Body of pancreas (tissue), 4 donors: ENCODE measurements at regions of chr5 and their contacts with region 1.

Region 1: DNA sequence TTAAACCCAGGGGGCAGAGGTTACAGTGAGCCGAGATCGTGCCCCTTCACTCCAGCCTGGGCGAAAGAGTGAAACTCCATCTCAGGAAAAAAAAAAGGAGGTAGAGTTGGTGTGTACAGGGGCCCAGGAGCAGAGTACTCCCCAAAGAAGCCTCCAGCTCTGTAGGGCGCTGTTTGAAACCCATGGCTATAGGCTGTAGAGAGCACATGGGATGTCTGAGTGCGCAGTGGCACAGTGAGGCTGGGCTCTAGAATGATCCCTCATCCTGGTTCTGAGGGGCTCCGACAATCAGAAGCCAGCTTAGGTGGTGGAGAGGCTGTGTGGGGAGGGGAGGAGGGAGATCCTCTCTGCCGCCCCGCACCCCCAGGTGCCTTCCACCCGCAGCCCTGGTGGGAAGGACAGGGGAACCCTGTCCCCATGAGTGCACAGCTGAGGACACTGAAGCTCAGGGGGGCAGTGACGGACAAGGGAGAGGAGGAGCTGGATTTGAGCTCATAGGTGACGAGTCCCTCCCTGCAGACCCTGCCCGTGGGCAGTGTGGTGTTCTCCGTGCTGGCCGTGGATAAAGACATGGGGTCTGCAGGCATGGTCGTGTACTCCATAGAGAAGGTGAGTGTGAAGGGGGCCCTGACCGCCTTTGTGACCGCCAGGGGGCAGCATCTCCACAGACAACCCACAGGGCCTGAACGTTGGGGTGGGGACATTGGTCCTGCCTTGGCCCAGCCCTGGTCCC is 24.6 kb downstream of the CDHR2 start:
- DNase-seq: peak; percentile 54 to 79 (median 66)
- ATAC-seq: peak; percentile 67
- H3K4me3 ChIP-seq: no peak overlapping the region
- H3K27ac ChIP-seq: no peak overlapping the region
- H3K4me1 ChIP-seq: no peaks in the 10 kb centered on the region
- H3K27me3 ChIP-seq: no peaks in the 10 kb centered on the region
- CTCF ChIP-seq: peak; percentile 53 to 77 (median 67)
- POLR2A ChIP-seq: no peak

Region 2: DNA sequence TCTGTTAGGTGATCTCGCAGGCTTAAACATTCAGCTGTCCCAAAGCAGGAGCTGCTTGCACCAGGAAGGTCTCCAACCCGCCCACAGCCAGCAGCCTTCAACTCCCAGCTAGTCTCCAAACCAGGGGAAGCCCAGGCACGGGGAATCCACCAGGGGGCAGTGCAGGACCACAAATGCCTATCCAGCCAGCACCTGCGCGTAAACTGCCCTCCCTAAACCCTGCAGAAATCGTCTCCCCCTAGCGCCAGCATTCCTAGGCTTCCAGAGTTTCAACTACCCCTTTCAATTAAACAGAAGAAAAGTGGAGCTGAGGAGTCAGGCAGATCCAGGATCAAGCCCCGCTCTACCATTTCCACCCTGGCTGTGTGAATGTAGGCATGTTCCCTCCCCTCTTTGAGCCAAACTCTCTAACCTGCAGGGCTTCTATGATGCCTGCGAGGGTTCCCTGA is 843.9 kb before region 1 on chr5:
- intact Hi-C with region 1: loop called (anchors 10 kb)
- DNase-seq: peak; percentile 91 to 96 (median 94)
- ATAC-seq: peak; percentile 86
- H3K4me3 ChIP-seq: no peak overlapping the region
- H3K27ac ChIP-seq: no peak overlapping the region
- H3K4me1 ChIP-seq: peaks cover 6% of the 10 kb centered on the region
- H3K27me3 ChIP-seq: no peaks in the 10 kb centered on the region
- CTCF ChIP-seq: peak; percentile 89 to 99 (median 97)
- POLR2A ChIP-seq: no peak

Region 3: DNA sequence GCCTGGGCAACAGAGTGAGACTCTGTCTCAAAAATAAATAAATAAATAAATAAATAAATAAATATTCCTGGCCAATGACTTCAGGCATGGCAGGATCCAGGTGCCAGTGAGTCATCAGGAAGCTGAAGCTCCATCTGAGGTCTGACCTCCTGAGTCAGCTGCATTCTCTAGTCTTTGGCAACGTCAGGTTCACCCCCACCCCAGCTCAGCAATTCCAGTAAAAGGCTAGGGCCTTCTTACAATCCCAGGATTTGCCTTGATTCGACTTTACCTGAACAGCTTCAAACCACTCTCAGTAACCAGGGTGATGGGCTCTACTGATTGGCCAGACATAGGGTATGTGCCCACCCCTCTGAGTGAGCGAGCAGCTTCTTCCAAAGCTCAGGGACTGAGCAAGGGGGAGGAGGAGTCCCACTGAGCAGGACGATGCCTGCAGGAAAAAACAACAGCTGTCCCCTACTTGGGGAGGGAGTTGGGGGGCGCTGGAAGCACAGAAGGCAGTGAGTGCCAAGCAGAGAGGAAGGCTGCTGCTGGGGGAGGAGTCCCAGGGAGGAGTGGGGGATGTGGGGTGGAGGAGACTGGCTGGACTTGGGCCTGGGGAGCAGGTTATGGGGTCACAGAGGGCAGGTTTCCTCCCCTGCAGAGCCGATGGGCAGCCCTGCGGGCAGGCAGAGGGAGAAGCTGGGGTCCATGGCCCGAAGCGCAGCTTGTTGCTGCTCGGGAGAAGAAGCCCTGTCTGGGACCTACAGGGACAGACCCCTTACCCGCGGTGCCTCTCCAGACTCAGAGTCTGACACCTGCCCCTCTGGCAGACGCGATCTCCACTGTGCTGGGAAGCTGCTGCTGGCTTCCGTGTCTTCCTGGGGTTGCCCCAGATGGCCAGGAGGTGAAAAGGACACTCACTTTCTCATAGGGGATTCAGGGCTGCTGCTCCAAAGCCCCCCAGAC is 210.8 kb after region 1 on chr5:
- intact Hi-C with region 1: no loop called
- DNase-seq: no peak
- ATAC-seq: no peak
- H3K4me3 ChIP-seq: no peak overlapping the region
- H3K27ac ChIP-seq: no peak overlapping the region
- H3K4me1 ChIP-seq: no peaks in the 10 kb centered on the region
- H3K27me3 ChIP-seq: no peaks in the 10 kb centered on the region
- CTCF ChIP-seq: no peak
- POLR2A ChIP-seq: no peak